ENCODE measurements at regions of chrX and their contacts with region 1.

Region 1: DNA sequence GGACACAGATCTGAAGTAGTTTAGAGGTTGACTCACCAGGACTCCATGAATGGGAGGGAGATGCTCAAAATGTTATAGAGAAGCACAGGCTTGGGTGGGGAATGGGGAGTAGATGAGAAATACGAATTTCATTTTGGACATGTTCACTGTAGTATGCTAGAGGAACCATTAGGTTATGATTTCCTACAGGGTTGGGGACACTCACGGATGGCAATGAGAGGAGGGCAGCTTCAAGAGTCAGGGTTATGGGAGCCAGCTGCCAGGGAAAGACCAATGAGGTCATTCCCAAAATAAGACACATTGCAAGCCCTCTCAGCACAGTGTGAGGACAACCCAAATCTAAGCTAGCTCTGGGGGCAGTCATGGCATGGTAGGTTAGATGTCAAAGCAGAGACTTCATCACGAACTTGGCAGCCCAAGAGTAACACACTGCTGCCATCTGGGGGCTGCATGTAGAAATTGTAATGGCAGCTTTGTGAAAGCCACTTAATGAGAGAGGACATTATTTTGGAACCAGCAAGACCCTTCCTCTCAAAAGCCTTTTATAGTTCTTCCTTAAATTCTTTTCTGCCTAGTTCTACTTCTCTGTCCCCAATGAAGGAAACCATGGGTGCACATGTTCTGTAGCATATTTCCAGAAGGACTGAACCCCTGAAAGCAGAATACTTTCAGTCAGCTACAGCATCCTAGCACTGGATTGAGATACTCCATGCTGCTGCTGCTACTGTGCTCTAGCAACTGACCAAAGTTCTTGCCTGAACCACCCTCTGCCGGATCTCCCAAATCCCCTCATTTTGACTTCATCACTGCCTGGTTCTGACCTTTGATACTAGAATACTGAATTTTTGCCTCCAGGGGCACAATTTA is 16.2 kb upstream of the ZCCHC12 start:
- DNase-seq: peak; percentile 50 to 78 (median 69)
- H3K4me3 ChIP-seq: no peak overlapping the region
- H3K27ac ChIP-seq: no peak overlapping the region
- H3K4me1 ChIP-seq: peaks cover 0 to 6% (median 2%) of the 10 kb centered on the region in 4 experiments
- H3K27me3 ChIP-seq: peaks cover 0 to 4% (median 0%) of the 10 kb centered on the region in 5 experiments

Region 2: DNA sequence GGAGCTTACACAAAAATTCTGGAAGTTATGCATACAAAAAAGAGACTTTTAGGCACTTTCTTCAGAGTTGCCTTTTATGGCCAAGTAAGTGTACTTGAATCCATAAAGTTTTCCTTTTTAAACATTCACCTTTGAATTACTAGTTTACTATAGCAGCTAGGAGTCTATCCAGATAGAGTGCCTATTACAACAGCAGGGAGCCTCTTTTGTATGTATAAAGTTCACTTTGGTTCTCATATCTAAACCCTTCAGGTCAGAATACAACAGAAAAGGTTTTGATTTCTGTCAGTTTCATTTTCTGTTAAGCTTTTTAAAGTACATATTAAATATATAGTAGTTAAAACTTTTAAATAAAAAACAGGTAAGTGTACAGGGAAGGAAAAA is 131.4 kb before region 1 on chrX:
- CTCF ChIA-PET with region 1: no interaction called
- POLR2A ChIA-PET with region 1: no interaction called
- DNase-seq: no peak
- H3K4me3 ChIP-seq: no peak overlapping the region
- H3K27ac ChIP-seq: no peak overlapping the region
- H3K4me1 ChIP-seq: no peaks in the 10 kb centered on the region
- H3K27me3 ChIP-seq: no peaks in the 10 kb centered on the region

Region 3: GRCh38 chrX:118761939-118762707 is 45.3 kb before region 1 on chrX:
- CTCF ChIA-PET with region 1: interaction called, 10 read pairs
- POLR2A ChIA-PET with region 1: no interaction called
- DNase-seq: peak; percentile 5 to 31 (median 24)
- H3K4me3 ChIP-seq: no peak overlapping the region
- H3K27ac ChIP-seq: no peak overlapping the region
- H3K4me1 ChIP-seq: no peaks in the 10 kb centered on the region
- H3K27me3 ChIP-seq: no peaks in the 10 kb centered on the region

Region 4: DNA sequence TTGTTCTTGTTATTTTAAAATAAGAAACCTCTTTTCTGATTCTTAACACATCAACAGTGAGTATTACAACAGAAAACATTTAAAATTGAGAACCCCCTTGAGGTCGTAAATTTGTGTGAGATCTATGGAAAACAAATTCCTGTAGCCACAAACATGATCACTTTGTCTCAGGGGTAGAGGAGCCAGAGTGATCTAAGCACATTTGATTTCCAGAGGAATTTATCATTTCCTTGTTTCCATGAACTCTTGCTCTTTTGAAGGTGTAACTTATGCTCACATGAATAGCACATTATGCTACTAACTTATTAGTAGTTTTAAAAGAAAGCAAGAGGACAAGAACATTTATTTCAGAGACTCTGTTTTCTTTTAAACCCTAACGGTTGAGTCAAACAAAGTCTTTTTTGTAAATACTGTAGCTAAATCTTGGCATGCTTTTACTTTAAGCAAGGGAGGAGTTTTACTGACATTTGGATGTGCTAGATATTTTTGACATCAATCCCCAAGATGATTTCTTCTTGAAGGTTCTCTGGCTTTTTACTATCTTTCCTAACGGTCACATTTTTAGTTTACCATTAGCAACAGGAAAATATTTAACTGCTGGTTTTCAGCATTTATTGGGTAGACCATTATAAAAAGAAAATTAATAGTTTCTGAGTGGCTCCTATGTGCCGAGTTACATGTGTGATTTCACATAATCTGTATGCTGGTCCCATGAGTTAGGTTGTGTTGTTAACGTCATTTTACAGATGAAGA is 11.7 kb before region 1 on chrX:
- CTCF ChIA-PET with region 1: no interaction called
- POLR2A ChIA-PET with region 1: no interaction called
- DNase-seq: no peak
- H3K4me3 ChIP-seq: no peak overlapping the region
- H3K27ac ChIP-seq: no peak overlapping the region
- H3K4me1 ChIP-seq: no peaks in the 10 kb centered on the region
- H3K27me3 ChIP-seq: no peaks in the 10 kb centered on the region

Region 5: DNA sequence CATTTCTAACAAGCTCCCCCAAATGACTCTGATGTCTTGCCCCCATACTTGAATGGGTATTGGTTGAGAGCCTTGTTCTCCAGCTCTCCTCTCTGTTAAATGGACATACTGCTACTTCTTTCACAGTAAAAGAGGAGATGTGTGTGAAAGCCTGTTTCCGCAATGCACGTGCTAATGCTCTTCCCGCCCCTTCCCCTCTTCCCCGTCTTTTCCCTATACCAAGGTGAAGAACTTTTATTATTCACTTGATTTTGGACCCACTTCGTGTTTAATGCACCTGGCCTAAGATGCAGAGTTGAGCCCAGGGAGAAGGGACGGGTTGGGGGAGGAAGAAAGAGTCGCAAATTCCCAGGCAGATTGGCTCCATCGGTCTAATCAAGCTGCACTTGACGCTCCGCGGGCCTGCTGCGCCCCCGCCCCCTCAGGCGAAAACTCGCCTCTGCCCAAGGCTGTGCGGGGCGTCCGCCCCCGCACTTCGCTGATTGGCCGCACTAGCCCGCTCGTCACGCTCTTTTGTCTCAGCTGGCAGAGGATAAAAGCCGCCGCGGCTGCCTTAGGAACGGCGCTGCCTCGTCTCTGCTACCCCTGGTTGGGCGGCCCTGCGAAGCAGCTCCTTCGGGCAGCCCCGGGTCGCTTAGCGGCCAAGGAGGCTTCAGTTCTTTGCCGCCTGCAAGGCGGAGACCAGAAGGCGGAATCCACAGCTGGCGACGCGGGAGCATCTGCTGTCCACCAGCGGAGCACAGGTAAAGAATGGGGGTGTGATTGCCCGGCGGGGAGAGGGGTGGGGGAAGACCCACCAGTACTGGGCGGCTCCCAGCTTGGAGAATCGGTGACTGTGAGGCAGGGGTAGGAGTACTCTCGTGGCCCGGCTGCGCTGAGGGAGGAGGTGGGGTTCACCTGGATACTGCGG is 16.1 kb after region 1 on chrX and contains the start of gene ZCCHC12:
- CTCF ChIA-PET with region 1: interaction called, 11 read pairs
- POLR2A ChIA-PET with region 1: no interaction called
- DNase-seq: peak; percentile 70 to 87 (median 83)
- H3K4me3 ChIP-seq: peak within 1 kb of the TSS in 5 of 7 experiments; percentile 19 to 58 (median 48)
- H3K27ac ChIP-seq: no peak within 1 kb of the TSS
- H3K4me1 ChIP-seq: peaks cover 0 to 19% (median 8%) of the 10 kb centered on the region in 4 experiments
- H3K27me3 ChIP-seq: peaks cover 6 to 77% (median 42%) of the 10 kb centered on the region in 5 experiments

Measured in common myeloid progenitor, CD34-positive (primary cell).